ENCODE measurements at regions of chr7 and their contacts with region 1.

Region 1: GRCh38 chr7:128209229-128210035 is 31.6 kb upstream of the LEP start:
- DNase-seq: no peak
- H3K4me3 ChIP-seq: no peak overlapping the region
- H3K27ac ChIP-seq: no peak overlapping the region
- H3K4me1 ChIP-seq: no peaks in the 10 kb centered on the region
- H3K27me3 ChIP-seq: no peaks in the 10 kb centered on the region
- CTCF ChIP-seq: peak; percentile 93 to 96 (median 96)
- POLR2A ChIP-seq: no peak

Region 2: DNA sequence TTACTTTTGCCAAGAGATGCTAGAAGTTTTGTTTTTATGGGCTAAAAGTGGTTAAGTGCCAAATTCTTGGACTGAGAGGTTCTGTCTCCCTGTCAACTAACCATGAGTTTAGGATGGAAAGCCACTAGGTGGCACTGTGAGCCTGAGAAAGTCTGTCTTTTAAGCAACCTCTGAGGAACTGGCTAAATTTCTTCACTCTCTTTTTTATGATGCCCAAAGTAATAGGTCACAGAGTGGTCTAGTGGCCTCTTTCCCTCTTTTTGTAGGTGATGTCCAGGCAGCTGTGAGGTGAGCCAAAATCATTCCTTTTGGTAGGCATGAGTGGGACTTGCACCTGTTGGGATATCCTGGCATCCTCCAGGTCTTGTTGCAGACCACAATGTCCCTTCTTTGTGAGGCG is 500.6 kb before region 1 on chr7:
- intact Hi-C with region 1: loop called (anchors 5 kb)
- DNase-seq: no peak
- H3K4me3 ChIP-seq: no peak overlapping the region
- H3K27ac ChIP-seq: no peak overlapping the region
- H3K4me1 ChIP-seq: no peaks in the 10 kb centered on the region
- H3K27me3 ChIP-seq: no peaks in the 10 kb centered on the region
- CTCF ChIP-seq: peak; percentile 52 to 77 (median 67)
- POLR2A ChIP-seq: no peak

Region 3: DNA sequence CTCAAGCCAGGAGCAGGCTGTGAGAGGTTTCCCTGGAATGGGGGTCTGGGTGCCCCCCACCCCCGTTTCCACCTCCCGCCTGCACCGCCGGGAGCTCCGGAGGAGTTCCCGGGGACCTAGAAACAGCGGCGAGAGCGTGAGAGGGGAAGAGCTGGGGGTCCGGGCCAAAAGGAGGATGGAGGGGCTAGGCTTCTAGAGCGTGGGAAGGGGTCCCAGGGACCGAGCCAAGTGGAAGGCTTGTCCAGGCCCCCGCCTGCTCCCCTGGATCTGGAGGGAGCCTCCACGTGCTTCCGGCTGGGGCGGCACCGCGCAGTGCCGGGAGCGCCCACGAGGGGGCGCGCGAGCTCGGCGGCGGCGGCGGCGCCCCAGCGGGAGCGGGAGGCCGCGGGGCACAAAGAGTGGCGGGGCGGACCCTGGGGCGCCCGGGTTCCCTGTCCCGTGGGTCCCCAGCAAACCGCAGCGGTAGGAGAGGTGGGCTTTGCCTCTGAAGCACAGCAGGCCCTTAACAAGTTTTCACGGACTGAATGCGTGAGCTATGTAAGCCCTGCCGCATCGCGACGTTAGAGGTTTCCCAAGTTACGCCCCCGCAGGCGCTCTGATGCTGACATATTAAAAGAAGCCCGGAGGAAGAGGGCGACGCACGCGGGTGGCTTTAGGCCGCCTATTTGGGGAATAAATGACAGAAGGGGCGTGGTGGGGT is 73.8 kb before region 1 on chr7:
- intact Hi-C with region 1: loop called (anchors 10 kb)
- DNase-seq: peak; percentile 74 to 81
- H3K4me3 ChIP-seq: peak overlapping the region; percentile 42
- H3K27ac ChIP-seq: no peak overlapping the region
- H3K4me1 ChIP-seq: peaks cover 21% of the 10 kb centered on the region
- H3K27me3 ChIP-seq: no peaks in the 10 kb centered on the region
- CTCF ChIP-seq: peak; percentile 31 to 76 (median 52)
- POLR2A ChIP-seq: no peak

Region 4: GRCh38 chr7:128164061-128164954 is 45.1 kb before region 1 on chr7:
- intact Hi-C with region 1: no loop called
- DNase-seq: peak in 1 of 2 donors; percentile 58
- H3K4me3 ChIP-seq: no peak overlapping the region
- H3K27ac ChIP-seq: no peak overlapping the region
- H3K4me1 ChIP-seq: peaks cover 27% of the 10 kb centered on the region
- H3K27me3 ChIP-seq: peaks cover 10% of the 10 kb centered on the region
- CTCF ChIP-seq: no peak
- POLR2A ChIP-seq: no peak